ENCODE measurements at regions of chr1 and their contacts with region 1.

Region 1: DNA sequence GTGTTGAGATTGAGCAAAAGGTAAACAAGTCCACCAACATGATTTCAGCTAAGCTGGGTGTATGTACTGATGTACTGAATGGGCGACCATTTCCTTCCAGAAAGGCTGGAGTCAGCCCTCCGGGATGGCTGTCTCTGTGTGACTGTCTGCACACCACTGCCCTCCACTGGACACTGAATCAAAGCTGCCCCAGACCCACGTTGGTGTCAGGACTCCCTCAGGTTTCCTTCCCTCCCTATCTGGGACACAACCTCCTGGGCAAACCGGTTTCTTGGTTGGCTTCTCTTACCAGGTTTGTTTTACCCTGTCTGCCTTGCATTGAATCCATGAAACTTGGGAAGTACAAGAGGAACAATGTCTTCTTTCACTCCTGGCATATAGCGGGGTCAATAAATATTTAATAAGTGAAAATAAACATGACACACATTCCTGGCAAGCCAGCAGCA is 5.3 kb upstream of the SRP9 start:
- DNase-seq: peak; percentile 88
- ATAC-seq: peak; percentile 90
- H3K4me3 ChIP-seq: no peak overlapping the region
- H3K27ac ChIP-seq: peak overlapping the region; percentile 20; the same call in 1 of the 2 replicates
- H3K4me1 ChIP-seq: peaks cover 16% of the 10 kb centered on the region
- H3K27me3 ChIP-seq: no peaks in the 10 kb centered on the region
- CTCF ChIP-seq: peak; percentile 94
- POLR2A ChIP-seq: peak; percentile 60; the same call in 1 of the 2 replicates
- RAD21 ChIP-seq: peak; percentile 99

Region 2: DNA sequence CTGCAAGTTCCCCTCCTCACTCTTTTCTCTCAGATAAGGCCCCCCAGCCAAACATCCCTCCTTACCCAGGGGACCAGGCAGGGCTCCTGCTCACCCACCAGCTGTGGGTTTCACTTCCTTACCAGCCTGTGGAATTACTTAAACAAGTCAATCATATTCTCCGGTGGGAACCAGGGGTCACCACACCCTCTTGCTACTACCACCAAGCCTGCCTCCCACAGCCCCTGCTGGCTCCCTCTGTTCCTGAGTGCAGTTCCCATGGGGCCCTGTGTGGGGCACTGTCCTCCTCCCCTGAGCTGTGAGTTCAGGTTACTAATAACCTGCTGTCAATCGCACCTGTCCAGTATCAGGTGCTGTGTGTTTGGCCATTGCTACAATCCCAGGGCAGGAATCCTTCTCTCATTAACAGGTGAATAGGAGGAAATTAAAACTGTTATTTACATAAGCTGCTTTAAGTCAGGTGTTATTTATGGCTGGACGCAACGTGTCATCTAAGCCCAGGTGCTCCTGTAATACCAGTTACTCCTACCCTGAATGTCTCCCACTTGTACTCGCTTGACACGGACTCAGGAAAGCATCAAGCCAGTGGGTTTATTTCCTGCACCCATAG is 291.4 kb before region 1 on chr1:
- CTCF ChIA-PET with region 1: interaction called, 14 read pairs
- POLR2A ChIA-PET with region 1: interaction called, 3 read pairs
- dilution Hi-C with region 1: no loop called
- in situ Hi-C with region 1: loop called (anchors 5 kb)
- intact Hi-C with region 1: loop called (anchors 2 kb)
- DNase-seq: no peak
- ATAC-seq: peak; percentile 42; the same call in 1 of the 2 replicates
- H3K4me3 ChIP-seq: no peak overlapping the region
- H3K27ac ChIP-seq: no peak overlapping the region
- H3K4me1 ChIP-seq: peaks cover 4% of the 10 kb centered on the region
- H3K27me3 ChIP-seq: no peaks in the 10 kb centered on the region
- CTCF ChIP-seq: peak; percentile 48
- POLR2A ChIP-seq: no peak
- RAD21 ChIP-seq: peak; percentile 66

Region 3: DNA sequence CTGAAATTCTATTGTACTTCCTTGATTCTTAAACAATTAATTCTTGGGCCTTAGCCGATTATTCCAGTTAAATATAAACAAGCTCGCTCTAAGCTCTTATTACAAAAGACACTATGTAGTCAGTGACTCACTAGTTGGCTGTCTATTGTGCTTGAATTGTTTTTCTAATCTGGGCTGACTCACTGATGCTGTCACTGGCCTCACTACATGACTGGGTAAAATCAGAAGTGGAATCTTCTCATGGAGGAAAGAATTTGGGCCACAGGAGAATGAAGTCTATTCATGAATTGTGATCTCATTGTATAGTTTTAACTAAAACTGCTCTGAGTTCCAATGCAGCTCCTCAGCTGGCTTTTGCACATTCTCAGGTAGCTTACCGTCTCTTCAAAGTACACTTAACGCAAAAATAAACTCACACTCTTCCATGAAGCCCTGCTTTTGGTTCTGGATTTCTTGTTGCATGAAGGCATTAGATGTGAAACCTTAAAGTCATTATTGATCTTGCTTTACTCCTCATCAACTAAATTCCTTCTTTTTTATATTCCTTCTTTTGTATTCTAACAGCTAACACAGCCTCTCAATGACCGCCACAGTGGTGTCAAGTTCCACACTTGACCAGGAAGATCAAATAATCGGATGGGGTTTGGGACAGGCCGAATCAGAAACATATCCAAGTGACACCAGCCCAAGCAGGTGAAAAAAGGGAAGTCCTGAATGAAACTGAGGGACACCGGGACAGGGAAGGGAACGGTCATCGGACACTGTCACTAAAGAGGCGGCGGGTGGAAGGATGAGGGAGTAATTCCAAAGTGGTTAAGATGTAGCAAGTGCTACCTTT is 263.6 kb before region 1 on chr1:
- CTCF ChIA-PET with region 1: no interaction called
- POLR2A ChIA-PET with region 1: interaction called, 3 read pairs
- dilution Hi-C with region 1: no loop called
- in situ Hi-C with region 1: no loop called
- intact Hi-C with region 1: loop called (anchors 1 kb)
- DNase-seq: peak; percentile 99
- ATAC-seq: peak; percentile 97
- H3K4me3 ChIP-seq: no peak overlapping the region
- H3K27ac ChIP-seq: peak overlapping the region; percentile 56
- H3K4me1 ChIP-seq: peaks cover 10% of the 10 kb centered on the region
- H3K27me3 ChIP-seq: no peaks in the 10 kb centered on the region
- CTCF ChIP-seq: no peak
- POLR2A ChIP-seq: no peak
- RAD21 ChIP-seq: 0 out of 2 replicates have a peak, but pooled peaks have one; percentile 8

Region 4: DNA sequence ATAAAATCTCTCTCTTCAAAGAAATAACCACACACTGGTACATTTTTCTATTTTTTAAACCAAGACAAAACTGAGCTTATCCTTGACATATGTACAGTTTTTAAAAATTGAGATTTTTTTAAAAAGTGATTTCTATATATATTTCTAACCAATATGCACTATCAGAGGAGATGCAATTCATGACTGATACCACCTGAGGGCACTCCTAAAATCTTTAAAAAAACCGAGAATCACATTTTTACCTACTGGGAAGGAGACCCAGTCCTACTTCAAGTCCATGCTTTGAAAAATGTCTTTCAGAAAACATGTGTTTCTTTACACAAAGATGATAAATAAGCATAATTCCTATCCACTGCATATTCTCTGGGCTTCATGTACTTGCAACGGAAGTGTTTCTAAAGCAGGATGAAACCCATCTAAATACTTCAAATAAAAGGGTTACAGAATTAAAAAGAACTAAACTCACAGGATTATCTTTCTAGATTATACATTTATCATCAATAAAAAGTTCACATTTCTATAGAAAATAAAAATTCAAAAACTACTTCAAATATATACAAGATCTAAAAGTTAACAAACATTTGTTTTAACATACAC is 218.0 kb before region 1 on chr1:
- CTCF ChIA-PET with region 1: interaction called, 5 read pairs
- POLR2A ChIA-PET with region 1: no interaction called
- dilution Hi-C with region 1: no loop called
- in situ Hi-C with region 1: no loop called
- intact Hi-C with region 1: loop called (anchors 1 kb)
- DNase-seq: peak; percentile 44
- ATAC-seq: peak; percentile 69
- H3K4me3 ChIP-seq: no peak overlapping the region
- H3K27ac ChIP-seq: no peak overlapping the region
- H3K4me1 ChIP-seq: peaks cover 4% of the 10 kb centered on the region; the same call in 1 of the 2 replicates
- H3K27me3 ChIP-seq: no peaks in the 10 kb centered on the region
- CTCF ChIP-seq: peak; percentile 51
- POLR2A ChIP-seq: no peak
- RAD21 ChIP-seq: peak; percentile 55

Region 5: DNA sequence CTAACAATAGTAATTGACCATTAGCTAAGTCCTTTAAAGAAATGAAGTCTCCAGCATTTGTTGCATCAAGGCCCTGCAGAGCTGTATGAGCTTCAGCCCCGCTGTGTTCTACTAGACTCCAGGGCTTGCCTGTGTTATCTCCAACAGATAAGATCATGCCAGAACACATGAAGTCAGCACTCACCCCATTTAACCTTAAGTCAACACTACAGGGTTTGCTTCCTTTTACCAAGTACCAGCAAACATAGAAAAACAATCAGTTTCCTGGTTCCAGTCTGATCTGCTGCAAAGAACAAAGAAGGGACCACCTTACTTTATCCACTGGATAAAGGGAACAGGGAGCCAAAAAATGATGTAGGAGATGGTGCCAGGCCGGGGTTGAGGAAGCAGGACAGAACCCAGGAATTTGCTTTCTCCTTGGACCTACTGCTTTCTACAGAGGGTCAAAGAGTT is 78.2 kb before region 1 on chr1:
- CTCF ChIA-PET with region 1: interaction called, 3 read pairs
- POLR2A ChIA-PET with region 1: no interaction called
- dilution Hi-C with region 1: no loop called
- in situ Hi-C with region 1: no loop called
- intact Hi-C with region 1: loop called (anchors 5 kb)
- DNase-seq: peak; percentile 56
- ATAC-seq: 0 out of 2 replicates have a peak, but pooled peaks have one; percentile 14
- H3K4me3 ChIP-seq: no peak overlapping the region
- H3K27ac ChIP-seq: no peak overlapping the region
- H3K4me1 ChIP-seq: peaks cover 13% of the 10 kb centered on the region
- H3K27me3 ChIP-seq: no peaks in the 10 kb centered on the region; the same call in 1 of the 2 replicates
- CTCF ChIP-seq: no peak
- POLR2A ChIP-seq: no peak
- RAD21 ChIP-seq: no peak

Region 6: GRCh38 chr1:225977937-225978748 is 205.8 kb after region 1 on chr1:
- CTCF ChIA-PET with region 1: no interaction called
- POLR2A ChIA-PET with region 1: no interaction called
- dilution Hi-C with region 1: no loop called
- in situ Hi-C with region 1: no loop called
- intact Hi-C with region 1: loop called (anchors 2 kb)
- DNase-seq: no peak
- ATAC-seq: no peak
- H3K4me3 ChIP-seq: no peak overlapping the region
- H3K27ac ChIP-seq: no peak overlapping the region
- H3K4me1 ChIP-seq: no peaks in the 10 kb centered on the region
- H3K27me3 ChIP-seq: no peaks in the 10 kb centered on the region
- CTCF ChIP-seq: no peak
- POLR2A ChIP-seq: no peak
- RAD21 ChIP-seq: no peak